Activated CD4-positive, alpha-beta T cell treated with anti-CD3 and anti-CD28 coated beads for 36 hours (primary cell): ENCODE measurements at regions of chr3 and their contacts with region 1.

Region 1: DNA sequence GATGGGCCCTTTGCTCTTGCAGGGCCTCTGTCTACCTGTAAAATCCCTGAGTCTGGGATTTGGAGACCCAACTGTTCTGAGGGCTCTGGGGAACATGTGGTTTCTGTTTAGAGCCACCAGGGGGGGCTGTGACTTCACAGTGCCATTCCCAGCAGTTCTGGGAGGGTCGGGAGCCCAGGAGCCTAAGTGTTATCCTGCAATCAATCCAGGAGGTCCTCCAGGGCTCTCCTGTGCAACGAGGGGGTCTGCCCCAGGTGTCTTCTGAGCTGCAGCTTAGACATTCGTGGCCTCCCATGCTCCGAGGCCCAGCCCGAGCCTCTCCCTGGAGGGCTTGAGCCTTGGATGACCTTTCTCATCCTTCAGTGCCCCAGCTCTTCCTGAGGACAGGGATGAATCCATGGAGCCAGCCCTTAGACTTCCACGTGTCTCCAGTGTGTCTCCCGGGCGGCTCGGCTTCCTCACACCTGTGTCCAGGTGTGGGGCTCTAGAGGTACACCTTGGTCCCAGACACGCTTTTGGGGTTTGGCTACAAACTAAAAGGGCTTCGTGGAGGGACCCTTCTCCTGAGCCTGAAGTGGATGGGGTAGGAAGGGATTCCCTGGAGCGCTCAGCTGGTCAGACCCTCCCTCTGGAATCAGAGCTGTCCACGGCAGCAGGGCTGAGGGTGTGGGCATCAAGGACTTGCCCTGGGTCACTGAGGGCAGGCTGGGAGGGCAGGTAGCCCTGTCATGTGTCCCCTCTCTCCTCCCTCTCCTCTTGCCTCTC is 20.3 kb upstream of the ABTB1 start:
- DNase-seq: peak; percentile 57
- ATAC-seq: peak; percentile 74
- H3K4me3 Mint-ChIP-seq: no peak overlapping the region
- H3K27ac Mint-ChIP-seq: no peak overlapping the region
- H3K4me1 Mint-ChIP-seq: no peaks in the 10 kb centered on the region
- H3K27me3 Mint-ChIP-seq: peaks cover 2% of the 10 kb centered on the region

Region 2: GRCh38 chr3:127580327-127581060 is 71.9 kb before region 1 on chr3:
- CTCF ChIA-PET with region 1: no interaction called
- POLR2A ChIA-PET with region 1: no interaction called
- intact Hi-C with region 1: no loop called
- DNase-seq: no peak
- ATAC-seq: no peak
- H3K4me3 Mint-ChIP-seq: no peak overlapping the region
- H3K27ac Mint-ChIP-seq: no peak overlapping the region
- H3K4me1 Mint-ChIP-seq: peaks cover 13% of the 10 kb centered on the region
- H3K27me3 Mint-ChIP-seq: no peaks in the 10 kb centered on the region

Region 3: GRCh38 chr3:127831723-127832172 is 179.3 kb after region 1 on chr3:
- CTCF ChIA-PET with region 1: no interaction called
- POLR2A ChIA-PET with region 1: no interaction called
- intact Hi-C with region 1: loop called (anchors 1 to 10 kb)
- DNase-seq: peak; percentile 62
- ATAC-seq: no peak
- H3K4me3 Mint-ChIP-seq: no peak overlapping the region
- H3K27ac Mint-ChIP-seq: no peak overlapping the region
- H3K4me1 Mint-ChIP-seq: no peaks in the 10 kb centered on the region
- H3K27me3 Mint-ChIP-seq: peaks cover 6% of the 10 kb centered on the region

Region 4: DNA sequence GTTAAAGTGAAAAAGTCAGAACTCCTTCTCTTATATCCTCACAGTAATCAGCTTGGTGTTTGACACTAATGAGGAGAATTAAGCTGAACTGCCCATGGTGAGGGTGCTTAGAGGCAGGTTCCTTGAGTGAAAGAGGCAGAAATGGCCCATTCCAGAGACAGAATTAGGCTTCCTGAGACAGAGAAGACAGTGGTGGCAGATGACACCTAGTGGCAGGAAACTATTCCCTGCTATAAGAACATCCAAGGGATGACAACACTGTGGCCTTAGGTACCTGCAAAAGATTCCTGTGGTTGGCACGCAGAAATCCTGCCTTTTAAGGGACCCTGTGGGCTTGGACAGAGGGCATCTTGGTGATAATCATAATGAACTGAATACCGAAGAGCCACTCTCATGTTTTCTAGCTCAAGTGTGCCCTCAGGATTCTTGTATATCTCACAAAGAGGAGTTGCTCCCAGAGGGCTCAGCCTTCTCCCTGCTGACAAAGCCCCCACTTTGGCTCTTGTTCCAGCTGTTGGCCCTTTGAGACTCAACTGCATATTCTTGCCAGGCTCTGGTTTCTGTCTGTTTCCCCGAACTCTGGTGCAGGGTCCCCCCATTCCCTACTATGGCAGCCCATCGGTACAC is 318.7 kb after region 1 on chr3:
- CTCF ChIA-PET with region 1: interaction called, 3 read pairs
- POLR2A ChIA-PET with region 1: no interaction called
- intact Hi-C with region 1: loop called (anchors 1 kb)
- DNase-seq: peak; percentile 28
- ATAC-seq: peak; percentile 53
- H3K4me3 Mint-ChIP-seq: no peak overlapping the region
- H3K27ac Mint-ChIP-seq: no peak overlapping the region
- H3K4me1 Mint-ChIP-seq: no peaks in the 10 kb centered on the region
- H3K27me3 Mint-ChIP-seq: peaks cover 14% of the 10 kb centered on the region